ENCODE measurements at regions of chr2 and their contacts with region 1.

Region 1: DNA sequence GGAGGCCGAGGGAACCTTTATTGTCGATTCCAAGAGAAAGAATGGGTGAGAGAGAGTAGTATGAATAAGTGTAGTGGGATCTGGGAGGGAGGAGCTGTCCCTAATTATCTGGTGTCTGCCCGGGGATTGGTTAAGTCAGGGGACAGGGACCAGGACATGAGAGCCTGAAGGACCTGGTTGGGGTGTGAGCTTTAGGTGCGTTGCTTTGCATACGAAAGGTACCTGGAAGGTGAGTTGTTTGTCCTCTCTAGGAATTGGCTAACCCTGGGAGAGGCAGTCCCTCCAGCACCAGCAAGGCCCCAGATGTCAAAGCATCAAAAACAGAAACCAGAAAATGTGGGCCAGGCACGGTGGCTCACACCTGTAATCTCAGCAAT is 48.1 kb upstream of the RPL31 start:
- DNase-seq: no peak
- ATAC-seq: no peak
- H3K4me3 ChIP-seq: no peak overlapping the region
- H3K27ac ChIP-seq: no peak overlapping the region
- H3K4me1 ChIP-seq: no peaks in the 10 kb centered on the region
- H3K27me3 ChIP-seq: no peaks in the 10 kb centered on the region
- CTCF ChIP-seq: no peak

Region 2: GRCh38 chr2:100151310-100151709 is 802.7 kb before region 1 on chr2:
- CTCF ChIA-PET with region 1: no interaction called
- POLR2A ChIA-PET with region 1: no interaction called
- in situ Hi-C with region 1: no loop called
- intact Hi-C with region 1: no loop called
- DNase-seq: no peak
- ATAC-seq: no peak
- H3K4me3 ChIP-seq: no peak overlapping the region
- H3K27ac ChIP-seq: no peak overlapping the region
- H3K4me1 ChIP-seq: no peaks in the 10 kb centered on the region
- H3K27me3 ChIP-seq: no peaks in the 10 kb centered on the region
- CTCF ChIP-seq: no peak

Region 3: GRCh38 chr2:100857915-100858314 is 96.1 kb before region 1 on chr2:
- CTCF ChIA-PET with region 1: no interaction called
- POLR2A ChIA-PET with region 1: interaction called, 17 read pairs
- in situ Hi-C with region 1: no loop called
- intact Hi-C with region 1: no loop called
- DNase-seq: peak; percentile 92
- ATAC-seq: peak; percentile 24; the same call in 1 of the 2 replicates
- H3K4me3 ChIP-seq: peak overlapping the region in 1 of 2 experiments; percentile 19; a peak in 1 of 4 replicates
- H3K27ac ChIP-seq: peak overlapping the region; percentile 61
- H3K4me1 ChIP-seq: peaks cover 16% of the 10 kb centered on the region
- H3K27me3 ChIP-seq: no peaks in the 10 kb centered on the region
- CTCF ChIP-seq: no peak